ENCODE measurements at regions of chr7 and their contacts with region 1.

Region 1: GRCh38 chr7:114930829-114931655 is 9.1 kb downstream of the MDFIC start:
- DNase-seq: peak in 2 of 9 experiments; percentile 31 to 54
- ATAC-seq: peak; percentile 54
- H3K4me3 ChIP-seq: peak overlapping the region; percentile 30 to 36
- H3K4me3 Mint-ChIP-seq: peak overlapping the region; percentile 78
- H3K27ac ChIP-seq: peak overlapping the region; percentile 43 to 65
- H3K27ac Mint-ChIP-seq: peak overlapping the region; percentile 89
- H3K4me1 ChIP-seq: peaks cover 78% of the 10 kb centered on the region
- H3K4me1 Mint-ChIP-seq: peaks cover 35% of the 10 kb centered on the region
- H3K27me3 ChIP-seq: no peaks in the 10 kb centered on the region
- H3K27me3 Mint-ChIP-seq: no peaks in the 10 kb centered on the region
- CTCF ChIP-seq: no peak

Region 2: DNA sequence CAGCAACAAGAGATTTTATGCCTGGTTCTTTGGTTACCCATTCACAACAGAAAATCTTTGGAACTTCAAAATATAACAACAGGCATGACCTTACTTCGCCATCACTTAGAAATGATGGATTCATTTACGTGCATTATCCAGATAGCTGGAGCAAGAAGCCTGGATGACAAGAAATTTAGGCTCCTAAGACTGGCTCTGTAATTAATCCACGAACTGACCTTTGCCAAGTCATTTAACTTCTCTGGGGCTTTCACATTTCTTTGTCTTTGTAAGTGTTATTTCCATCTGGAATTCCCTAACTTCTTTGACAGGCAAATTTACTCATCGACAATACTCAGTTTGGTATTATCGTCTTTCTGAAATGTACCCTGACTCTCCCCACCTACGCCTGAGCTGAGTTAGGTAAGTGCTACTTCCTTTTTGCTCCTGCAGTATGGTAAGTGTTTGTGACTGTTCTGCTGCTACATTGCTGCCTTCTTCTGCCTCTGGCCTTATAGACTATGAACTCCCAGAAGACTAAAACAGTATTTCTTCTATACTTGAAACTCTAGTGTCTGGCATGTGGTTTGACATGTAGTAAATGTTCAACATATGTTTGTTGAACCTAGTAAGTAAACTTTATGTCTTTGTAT is 14.7 kb before region 1 on chr7:
- CTCF ChIA-PET with region 1: interaction called, 3 read pairs
- POLR2A ChIA-PET with region 1: interaction called, 7 read pairs
- intact Hi-C with region 1: loop called (anchors 2 kb)
- DNase-seq: peak in 4 of 9 experiments; percentile 8 to 64 (median 33)
- ATAC-seq: peak; percentile 85
- H3K4me3 ChIP-seq: no peak overlapping the region
- H3K4me3 Mint-ChIP-seq: peak overlapping the region; percentile 70
- H3K27ac ChIP-seq: peak overlapping the region; percentile 1 to 63
- H3K27ac Mint-ChIP-seq: peak overlapping the region; percentile 84
- H3K4me1 ChIP-seq: no peaks in the 10 kb centered on the region
- H3K4me1 Mint-ChIP-seq: peaks cover 28% of the 10 kb centered on the region
- H3K27me3 ChIP-seq: no peaks in the 10 kb centered on the region
- H3K27me3 Mint-ChIP-seq: no peaks in the 10 kb centered on the region
- CTCF ChIP-seq: no peak